ENCODE measurements at regions of chr12 and their contacts with region 1.

Region 1: GRCh38 chr12:58359084-58359483 is 417.7 kb downstream of the ATP23 start:
- DNase-seq: peak in 1 of 2 donors; percentile 3
- H3K4me3 ChIP-seq: no peak overlapping the region
- H3K27ac ChIP-seq: no peak overlapping the region
- H3K4me1 ChIP-seq: peaks cover 4 to 12% of the 10 kb centered on the region in 2 donors
- H3K27me3 ChIP-seq: no peaks in the 10 kb centered on the region
- CTCF ChIP-seq: no peak
- POLR2A ChIP-seq: no peak

Region 2: GRCh38 chr12:58313091-58313855 is 45.8 kb before region 1 on chr12:
- intact Hi-C with region 1: no loop called
- DNase-seq: no peak
- H3K4me3 ChIP-seq: no peak overlapping the region
- H3K27ac ChIP-seq: no peak overlapping the region
- H3K4me1 ChIP-seq: peaks cover 0 to 11% of the 10 kb centered on the region in 2 donors
- H3K27me3 ChIP-seq: no peaks in the 10 kb centered on the region
- CTCF ChIP-seq: no peak
- POLR2A ChIP-seq: no peak

Region 3: GRCh38 chr12:58443273-58443980 is 84.3 kb after region 1 on chr12:
- intact Hi-C with region 1: loop called (anchors 10 kb)
- DNase-seq: peak in 1 of 2 donors; percentile 16
- H3K4me3 ChIP-seq: no peak overlapping the region
- H3K27ac ChIP-seq: no peak overlapping the region
- H3K4me1 ChIP-seq: no peaks in the 10 kb centered on the region
- H3K27me3 ChIP-seq: no peaks in the 10 kb centered on the region
- CTCF ChIP-seq: peak in 3 of 6 experiments; percentile 32 to 41 (median 35)
- POLR2A ChIP-seq: no peak

Region 4: DNA sequence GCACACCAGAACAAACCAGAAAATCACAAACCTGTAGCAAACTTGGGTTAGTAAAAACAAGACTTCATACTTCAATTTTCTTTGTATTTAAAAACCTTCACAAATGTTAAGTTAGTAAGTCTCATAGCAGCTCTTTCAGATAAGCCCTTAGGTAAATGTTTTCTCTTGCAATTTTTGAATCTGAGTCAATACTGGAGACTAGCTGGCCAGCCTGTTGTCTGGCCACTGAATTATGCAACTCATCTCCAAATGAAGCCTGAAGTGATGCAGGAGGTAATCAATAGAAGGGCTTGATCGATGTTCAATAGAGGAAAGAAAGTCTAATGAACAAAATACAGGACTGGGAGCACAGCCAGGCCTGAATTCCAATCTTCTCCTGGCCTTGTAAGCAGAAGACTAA is 96.1 kb after region 1 on chr12:
- intact Hi-C with region 1: no loop called
- DNase-seq: no peak
- H3K4me3 ChIP-seq: no peak overlapping the region
- H3K27ac ChIP-seq: no peak overlapping the region
- H3K4me1 ChIP-seq: no peaks in the 10 kb centered on the region
- H3K27me3 ChIP-seq: no peaks in the 10 kb centered on the region
- CTCF ChIP-seq: no peak
- POLR2A ChIP-seq: no peak

Measured in thyroid gland (tissue), 4 donors.